ENCODE measurements at regions of chr5 and their contacts with region 1.

Region 1: GRCh38 chr5:102778478-102778877 is 23.4 kb downstream of the PAM start:
- DNase-seq: no peak
- H3K4me3 Mint-ChIP-seq: peak overlapping the region; percentile 45
- H3K27ac Mint-ChIP-seq: peak overlapping the region; percentile 85
- H3K4me1 Mint-ChIP-seq: peaks cover 73% of the 10 kb centered on the region
- H3K27me3 Mint-ChIP-seq: no peaks in the 10 kb centered on the region

Region 2: DNA sequence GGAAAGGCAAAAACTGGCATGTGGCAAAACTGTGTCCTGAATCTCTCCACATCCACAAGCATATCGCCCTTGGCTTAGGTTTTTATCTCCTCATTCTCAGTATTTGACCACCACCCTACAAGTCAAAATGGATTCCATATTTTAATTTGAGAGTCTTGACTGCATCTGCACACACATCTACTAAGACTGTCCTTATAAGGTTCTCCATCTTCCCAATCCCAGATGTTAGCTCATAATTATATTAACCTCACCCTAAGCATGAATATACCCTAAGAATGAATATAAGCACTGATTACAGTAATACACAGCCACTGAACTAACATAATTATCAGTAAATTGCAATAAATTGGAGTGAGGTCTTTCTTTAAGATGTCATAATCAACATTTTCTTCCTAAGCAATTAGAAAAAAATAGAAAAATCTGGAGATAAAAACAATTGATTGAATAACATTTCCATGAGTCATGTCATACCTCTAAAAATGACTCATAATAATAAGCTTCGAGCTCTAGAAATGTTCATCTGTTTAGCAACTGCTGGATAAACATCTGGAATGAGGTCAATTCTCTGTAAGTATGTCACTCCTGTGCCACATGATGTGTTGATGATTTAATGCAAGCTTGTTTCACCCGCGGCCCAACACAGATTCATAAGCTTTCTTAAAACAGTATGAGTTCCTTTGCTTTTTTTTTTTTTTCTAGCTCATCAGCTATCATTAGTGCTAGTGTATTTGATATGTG is 63.2 kb before region 1 on chr5:
- intact Hi-C with region 1: no loop called
- DNase-seq: no peak
- H3K4me3 Mint-ChIP-seq: no peak overlapping the region
- H3K27ac Mint-ChIP-seq: no peak overlapping the region
- H3K4me1 Mint-ChIP-seq: no peaks in the 10 kb centered on the region
- H3K27me3 Mint-ChIP-seq: peaks cover 1% of the 10 kb centered on the region

Region 3: DNA sequence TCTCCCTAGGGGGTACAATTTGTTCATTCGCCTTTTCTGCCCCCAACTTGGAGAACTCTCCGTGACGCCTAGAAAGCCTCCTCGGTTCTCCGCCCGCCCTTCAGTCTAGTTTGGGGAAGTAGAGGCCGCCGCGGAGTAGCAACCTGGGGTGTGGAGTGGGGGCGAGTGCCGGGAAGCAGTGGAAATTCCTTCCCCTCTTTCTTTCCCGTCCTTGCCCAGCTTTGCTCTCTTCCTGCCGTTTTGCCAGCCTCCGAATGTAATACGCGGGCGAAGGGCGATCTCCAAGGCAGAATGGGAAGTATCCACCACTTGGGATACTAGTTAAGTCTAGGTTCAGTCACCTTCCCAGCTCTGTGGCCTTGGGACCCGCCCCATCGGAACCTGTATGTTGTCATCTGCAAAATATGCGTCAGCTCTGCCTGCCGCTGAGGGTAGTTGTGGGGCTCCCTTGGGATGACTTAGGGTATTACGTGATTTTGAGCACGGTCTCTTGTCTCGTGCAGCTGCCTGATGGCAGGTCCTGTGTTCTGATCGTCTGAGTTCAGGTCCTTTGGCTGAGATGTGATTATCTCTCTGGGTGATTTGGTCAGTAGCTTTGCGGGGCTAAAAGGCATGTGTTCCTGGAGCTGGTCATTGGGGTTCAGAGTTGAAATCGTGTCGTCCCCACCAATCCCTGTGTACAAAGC is 22.6 kb before region 1 on chr5:
- intact Hi-C with region 1: loop called (anchors 1 kb)
- DNase-seq: peak; percentile 60
- H3K4me3 Mint-ChIP-seq: peak overlapping the region; percentile 96
- H3K27ac Mint-ChIP-seq: peak overlapping the region; percentile 96
- H3K4me1 Mint-ChIP-seq: peaks cover 58% of the 10 kb centered on the region
- H3K27me3 Mint-ChIP-seq: peaks cover 6% of the 10 kb centered on the region

Region 4: GRCh38 chr5:102792705-102793104 is 14.2 kb after region 1 on chr5:
- intact Hi-C with region 1: loop called (anchors 1 kb)
- DNase-seq: no peak
- H3K4me3 Mint-ChIP-seq: no peak overlapping the region
- H3K27ac Mint-ChIP-seq: no peak overlapping the region
- H3K4me1 Mint-ChIP-seq: peaks cover 23% of the 10 kb centered on the region
- H3K27me3 Mint-ChIP-seq: no peaks in the 10 kb centered on the region

Region 5: DNA sequence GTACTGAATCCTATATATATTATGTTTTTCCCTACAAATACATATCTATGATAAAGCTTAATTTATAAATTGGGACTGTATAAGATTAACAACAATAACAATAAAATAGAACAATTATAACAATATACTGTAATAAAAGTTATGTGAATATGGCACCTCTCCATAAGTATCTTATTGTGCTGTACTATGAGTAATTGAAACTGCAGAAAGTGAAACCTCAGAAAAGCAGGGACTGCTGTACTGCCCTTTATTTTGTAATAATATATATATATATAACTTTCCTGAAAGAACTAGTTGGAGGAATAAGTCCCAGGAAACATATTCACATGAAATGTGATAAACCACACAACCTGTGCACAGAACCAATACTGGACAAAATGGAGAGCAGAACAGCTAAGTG is 54.0 kb after region 1 on chr5:
- intact Hi-C with region 1: no loop called
- DNase-seq: no peak
- H3K4me3 Mint-ChIP-seq: no peak overlapping the region
- H3K27ac Mint-ChIP-seq: no peak overlapping the region
- H3K4me1 Mint-ChIP-seq: peaks cover 45% of the 10 kb centered on the region
- H3K27me3 Mint-ChIP-seq: no peaks in the 10 kb centered on the region

Region 6: GRCh38 chr5:102971697-102972293 is 193.3 kb after region 1 on chr5:
- intact Hi-C with region 1: loop called (anchors 2 kb)
- DNase-seq: no peak
- H3K4me3 Mint-ChIP-seq: no peak overlapping the region
- H3K27ac Mint-ChIP-seq: no peak overlapping the region
- H3K4me1 Mint-ChIP-seq: no peaks in the 10 kb centered on the region
- H3K27me3 Mint-ChIP-seq: peaks cover 1% of the 10 kb centered on the region

Region 7: DNA sequence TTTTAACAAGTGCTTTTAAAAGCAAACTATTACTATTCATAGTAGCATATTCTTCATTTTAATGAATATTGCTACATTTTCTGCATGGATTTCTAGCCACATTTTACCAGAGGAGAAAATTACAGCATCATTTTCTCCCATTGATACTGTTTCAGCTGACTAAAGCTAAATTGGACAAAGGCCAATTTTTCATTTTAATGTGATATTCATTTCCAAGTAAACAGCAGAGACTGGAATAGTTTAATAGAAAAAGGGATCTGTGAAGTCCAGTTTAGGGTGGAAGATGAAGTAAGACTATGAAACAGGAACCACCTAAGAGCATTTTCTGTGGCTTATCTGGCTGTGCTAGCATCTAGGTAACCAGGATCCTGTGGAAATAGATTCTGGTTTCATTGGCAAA is 213.3 kb after region 1 on chr5:
- intact Hi-C with region 1: no loop called
- DNase-seq: no peak
- H3K4me3 Mint-ChIP-seq: no peak overlapping the region
- H3K27ac Mint-ChIP-seq: no peak overlapping the region
- H3K4me1 Mint-ChIP-seq: no peaks in the 10 kb centered on the region
- H3K27me3 Mint-ChIP-seq: no peaks in the 10 kb centered on the region

Region 8: GRCh38 chr5:103139264-103139865 is 360.9 kb after region 1 on chr5:
- intact Hi-C with region 1: loop called (anchors 1 kb)
- DNase-seq: peak; percentile 61
- H3K4me3 Mint-ChIP-seq: no peak overlapping the region
- H3K27ac Mint-ChIP-seq: no peak overlapping the region
- H3K4me1 Mint-ChIP-seq: peaks cover 5% of the 10 kb centered on the region
- H3K27me3 Mint-ChIP-seq: no peaks in the 10 kb centered on the region

Measured in activated T-helper 1 cell treated with anti-CD3 and anti-CD28 coated beads, Interleukin-12 subunit alpha, Interleukin-12 subunit beta, Interleukin-2, Interleukin-4 antibody, amounts not matched to agents 30 ng/mL and 10 ng/mL and 1 ng/mL, durations not matched to agents 14 hours and 24 hours and 36 hours (primary cell).